Endothelial cell of umbilical vein (primary cell): ENCODE measurements at regions of chr20 and their contacts with region 1.

Region 1: GRCh38 chr20:19735446-19735845 is 22.6 kb upstream of the RIN2 start:
- DNase-seq: peak; percentile 94
- H3K4me3 ChIP-seq: no peak overlapping the region
- H3K27ac ChIP-seq: peak overlapping the region; percentile 53
- H3K4me1 ChIP-seq: peaks cover 20% of the 10 kb centered on the region
- H3K27me3 ChIP-seq: no peaks in the 10 kb centered on the region
- CTCF ChIP-seq: no peak
- POLR2A ChIP-seq: peak; percentile 20

Region 2: DNA sequence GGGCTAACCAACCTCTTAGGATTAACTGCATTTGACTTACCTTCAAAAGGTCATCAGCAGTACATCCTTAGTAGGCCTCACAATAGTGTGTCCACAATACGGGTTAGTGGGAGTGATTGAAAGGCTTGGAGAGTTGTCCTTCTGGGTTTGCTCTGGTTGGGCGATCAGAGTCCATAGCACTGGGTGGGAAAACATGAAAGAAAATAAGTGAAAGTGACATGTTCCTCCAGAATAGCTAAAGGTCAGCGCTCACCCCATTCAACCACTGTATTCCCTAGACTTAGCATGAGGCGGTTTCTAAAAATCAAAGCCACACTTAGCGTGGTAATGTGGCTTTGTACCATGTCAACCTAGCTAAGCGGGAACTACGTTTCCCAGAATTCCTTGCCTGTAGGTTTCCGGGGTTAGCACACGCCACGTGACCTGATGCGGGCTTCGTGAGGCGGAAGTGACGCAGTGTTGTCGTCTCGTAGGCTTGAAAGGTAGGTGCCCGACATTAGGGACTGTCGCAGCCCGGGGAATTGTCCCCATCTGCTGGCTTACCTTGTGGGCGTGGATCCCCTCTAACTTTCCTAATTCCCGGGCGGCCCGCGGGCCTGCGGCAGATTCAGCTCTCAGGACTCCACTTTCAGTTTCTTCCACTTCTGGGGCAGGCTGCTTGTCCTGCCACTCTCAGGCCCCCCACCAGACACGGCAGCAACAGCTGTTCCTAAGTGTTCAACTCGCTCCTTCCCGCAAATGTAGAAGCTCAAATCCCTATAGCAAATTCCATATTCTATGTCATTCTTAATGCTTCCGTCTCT is 941.6 kb before region 1 on chr20:
- CTCF ChIA-PET with region 1: no interaction called
- POLR2A ChIA-PET with region 1: no interaction called
- dilution Hi-C with region 1: no loop called
- intact Hi-C with region 1: no loop called
- DNase-seq: peak; percentile 90
- H3K4me3 ChIP-seq: peak overlapping the region; percentile 71 to 97 (median 80)
- H3K27ac ChIP-seq: peak overlapping the region; percentile 52
- H3K4me1 ChIP-seq: peaks cover 5% of the 10 kb centered on the region
- H3K27me3 ChIP-seq: peaks cover 0 to 2% of the 10 kb centered on the region in 2 experiments
- CTCF ChIP-seq: no peak
- POLR2A ChIP-seq: peak; percentile 80

Region 3: DNA sequence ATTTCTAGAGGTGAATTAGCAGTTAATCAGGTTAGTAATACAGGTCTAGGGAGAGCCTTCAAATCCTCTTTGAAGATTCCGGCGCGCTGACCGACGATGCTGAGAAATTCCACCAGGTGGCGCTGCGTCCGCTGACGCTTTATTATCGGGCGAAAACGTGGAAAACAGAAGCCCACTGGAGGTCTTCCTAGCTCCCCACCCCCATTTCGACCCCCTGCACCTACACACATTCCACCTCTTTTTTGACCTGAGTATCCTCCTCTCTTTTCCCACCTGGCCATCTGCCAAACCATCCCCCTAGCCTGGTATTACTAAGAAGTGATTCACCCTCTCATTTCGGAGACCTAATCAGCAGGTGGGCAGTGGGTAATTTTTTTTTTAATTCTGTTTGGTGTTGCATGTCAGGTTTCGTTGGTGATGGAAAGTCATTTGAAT is 42.7 kb before region 1 on chr20:
- CTCF ChIA-PET with region 1: interaction called, 16 read pairs
- POLR2A ChIA-PET with region 1: no interaction called
- dilution Hi-C with region 1: no loop called
- intact Hi-C with region 1: no loop called
- DNase-seq: peak; percentile 68
- H3K4me3 ChIP-seq: no peak overlapping the region
- H3K27ac ChIP-seq: no peak overlapping the region
- H3K4me1 ChIP-seq: peaks cover 5% of the 10 kb centered on the region
- H3K27me3 ChIP-seq: no peaks in the 10 kb centered on the region
- CTCF ChIP-seq: peak; percentile 84 to 87
- POLR2A ChIP-seq: no peak

Region 4: GRCh38 chr20:19699180-19699971 is 36.1 kb before region 1 on chr20:
- CTCF ChIA-PET with region 1: interaction called, 3 read pairs
- POLR2A ChIA-PET with region 1: interaction called, 3 read pairs
- dilution Hi-C with region 1: no loop called
- intact Hi-C with region 1: loop called (anchors 2 kb)
- DNase-seq: peak; percentile 75
- H3K4me3 ChIP-seq: no peak overlapping the region
- H3K27ac ChIP-seq: peak overlapping the region; percentile 19
- H3K4me1 ChIP-seq: peaks cover 19% of the 10 kb centered on the region
- H3K27me3 ChIP-seq: peaks cover 0 to 2% of the 10 kb centered on the region in 2 experiments
- CTCF ChIP-seq: no peak
- POLR2A ChIP-seq: no peak

Region 5: GRCh38 chr20:19757487-19758132 is 22.2 kb after region 1 on chr20:
- CTCF ChIA-PET with region 1: interaction called, 4 read pairs
- POLR2A ChIA-PET with region 1: no interaction called
- dilution Hi-C with region 1: no loop called
- intact Hi-C with region 1: loop called (anchors 1 kb)
- DNase-seq: peak; percentile 92
- H3K4me3 ChIP-seq: peak overlapping the region; percentile 75 to 77 (median 76)
- H3K27ac ChIP-seq: peak overlapping the region; percentile 54
- H3K4me1 ChIP-seq: peaks cover 18% of the 10 kb centered on the region
- H3K27me3 ChIP-seq: no peaks in the 10 kb centered on the region
- CTCF ChIP-seq: no peak
- POLR2A ChIP-seq: peak; percentile 61